ENCODE measurements at regions of chr12 and their contacts with region 1.

Region 1: DNA sequence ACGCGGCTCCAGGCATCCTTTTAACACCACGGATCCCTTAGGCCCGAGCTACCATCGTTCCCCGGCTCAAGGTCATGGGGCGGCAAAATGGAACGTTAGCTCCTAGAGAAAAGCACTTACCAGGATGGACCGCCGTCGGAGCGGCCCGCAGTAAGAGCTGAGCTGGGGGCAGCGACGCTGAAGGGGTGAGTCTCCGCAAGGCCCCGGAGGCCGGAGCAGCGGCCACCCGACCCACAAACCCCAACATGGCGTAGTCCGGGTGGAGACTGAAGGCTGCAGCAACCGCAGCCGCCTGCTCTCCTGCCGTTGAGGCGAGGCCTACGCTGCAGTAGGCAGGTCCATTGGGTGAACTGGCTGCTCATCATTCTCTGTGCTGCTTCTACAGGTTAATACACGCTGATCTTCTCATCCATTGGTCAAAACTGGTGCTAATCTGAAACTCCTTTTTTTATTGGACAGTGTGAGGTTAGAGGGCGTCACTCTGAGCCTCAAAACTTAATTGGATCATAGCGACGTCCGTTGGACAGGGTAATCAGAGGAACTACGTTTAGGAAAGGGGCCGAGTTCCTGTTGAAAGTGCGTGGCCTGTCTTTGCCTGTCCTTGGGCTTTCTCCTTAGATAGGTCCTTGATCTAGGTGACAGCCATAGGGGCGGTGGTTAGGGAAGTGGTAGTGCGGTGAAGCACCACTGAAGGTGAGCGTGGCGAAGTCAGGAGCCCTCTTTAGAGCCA is at the start of gene ATP5F1B:
- DNase-seq: peak; percentile 98 to 100 (median 99)
- H3K4me3 ChIP-seq: peak within 1 kb of the TSS; percentile 86 to 94 (median 91)
- H3K4me3 Mint-ChIP-seq: peak within 1 kb of the TSS; percentile 97 to 99
- H3K27ac ChIP-seq: peak within 1 kb of the TSS; percentile 81 to 94
- H3K27ac Mint-ChIP-seq: peak within 1 kb of the TSS; percentile 95 to 99 (median 97)
- H3K4me1 ChIP-seq: peaks cover 27 to 38% of the 10 kb centered on the region in 2 donors
- H3K4me1 Mint-ChIP-seq: peaks cover 31% of the 10 kb centered on the region
- H3K27me3 ChIP-seq: no peaks in the 10 kb centered on the region
- H3K27me3 Mint-ChIP-seq: peaks cover 0 to 4% (median 3%) of the 10 kb centered on the region in 3 donors
- CTCF ChIP-seq: no peak
- polyA plus RNA-seq, gene ATP5F1B: 554 to 1,093 (median 1,038) TPM

Region 2: GRCh38 chr12:56724972-56725722 is 79.3 kb after region 1 on chr12 and contains the start of gene NACA:
- intact Hi-C with region 1: loop called (anchors 5 to 10 kb)
- DNase-seq: peak; percentile 98 to 99 (median 99)
- H3K4me3 ChIP-seq: peak within 1 kb of the TSS; percentile 67 to 99 (median 98)
- H3K4me3 Mint-ChIP-seq: peak within 1 kb of the TSS; percentile 98
- H3K27ac ChIP-seq: peak within 1 kb of the TSS; percentile 93 to 97
- H3K27ac Mint-ChIP-seq: peak within 1 kb of the TSS; percentile 97 to 99 (median 98)
- H3K4me1 ChIP-seq: peaks cover 47 to 60% of the 10 kb centered on the region in 2 donors
- H3K4me1 Mint-ChIP-seq: peaks cover 48% of the 10 kb centered on the region
- H3K27me3 ChIP-seq: no peaks in the 10 kb centered on the region
- H3K27me3 Mint-ChIP-seq: peaks cover 0 to 2% (median 0%) of the 10 kb centered on the region in 3 donors
- CTCF ChIP-seq: no peak
- polyA plus RNA-seq, gene NACA: 797 to 1,102 (median 937) TPM

Measured in CD14-positive monocyte (primary cell).